Left ventricle myocardium inferior (tissue), 1 donor: ENCODE measurements at regions of chr9 and their contacts with region 1.

Region 1: GRCh38 chr9:76445976-76446375 is 13.0 kb upstream of the GCNT1 start:
- DNase-seq: no peak
- H3K4me3 ChIP-seq: no peak overlapping the region
- H3K27ac ChIP-seq: no peak overlapping the region
- H3K4me1 ChIP-seq: peaks cover 3% of the 10 kb centered on the region
- H3K27me3 ChIP-seq: no peaks in the 10 kb centered on the region
- CTCF ChIP-seq: no peak

Region 2: DNA sequence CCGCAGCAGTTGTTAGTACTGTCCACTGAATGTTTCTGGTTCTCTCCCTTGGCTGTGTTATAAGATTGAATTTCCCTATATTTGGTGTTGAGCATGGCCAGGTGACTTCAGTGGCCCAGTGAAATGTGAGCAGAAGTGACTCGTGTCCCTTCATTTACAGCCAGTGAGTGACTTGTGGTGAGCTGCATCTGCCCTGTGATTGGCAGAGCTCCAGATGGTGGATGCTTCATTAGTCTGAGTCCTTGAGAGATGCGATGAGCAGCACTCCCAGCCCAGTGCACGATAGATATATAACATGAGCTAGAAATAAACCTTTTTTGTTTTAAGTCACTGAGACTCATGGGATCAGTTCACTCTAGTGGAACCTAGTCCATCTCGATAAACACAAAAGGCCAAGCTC is 536.2 kb before region 1 on chr9:
- intact Hi-C with region 1: no loop called
- DNase-seq: no peak
- H3K4me3 ChIP-seq: no peak overlapping the region
- H3K27ac ChIP-seq: no peak overlapping the region
- H3K4me1 ChIP-seq: peaks cover 5% of the 10 kb centered on the region
- H3K27me3 ChIP-seq: no peaks in the 10 kb centered on the region
- CTCF ChIP-seq: no peak

Region 3: GRCh38 chr9:76658535-76659231 is 212.7 kb after region 1 on chr9:
- intact Hi-C with region 1: loop called (anchors 2 kb)
- DNase-seq: no peak
- H3K4me3 ChIP-seq: no peak overlapping the region
- H3K27ac ChIP-seq: no peak overlapping the region
- H3K4me1 ChIP-seq: peaks cover 17% of the 10 kb centered on the region
- H3K27me3 ChIP-seq: no peaks in the 10 kb centered on the region
- CTCF ChIP-seq: peak; percentile 69

Region 4: GRCh38 chr9:76704593-76705204 is 258.7 kb after region 1 on chr9:
- intact Hi-C with region 1: loop called (anchors 2 kb)
- DNase-seq: no peak
- H3K4me3 ChIP-seq: no peak overlapping the region
- H3K27ac ChIP-seq: no peak overlapping the region
- H3K4me1 ChIP-seq: no peaks in the 10 kb centered on the region
- H3K27me3 ChIP-seq: peaks cover 82% of the 10 kb centered on the region
- CTCF ChIP-seq: peak; percentile 75